ENCODE measurements at regions of chr22 and their contacts with region 1.

Region 1: GRCh38 chr22:49052023-49052538 is 775.6 kb downstream of the BRD1 start:
- DNase-seq: no peak
- ATAC-seq: peak in 2 of 4 donors; percentile 53 to 93
- H3K4me3 ChIP-seq: peak overlapping the region in 9 of 12 donors; percentile 17 to 55 (median 36)
- H3K27ac ChIP-seq: no peak overlapping the region
- H3K4me1 ChIP-seq: no peaks in the 10 kb centered on the region
- H3K27me3 ChIP-seq: peaks cover 0 to 6% (median 0%) of the 10 kb centered on the region in 9 donors
- CTCF ChIP-seq: no peak
- POLR2A ChIP-seq: no peak

Region 2: GRCh38 chr22:49103314-49104059 is 51.4 kb after region 1 on chr22:
- intact Hi-C with region 1: no loop called
- DNase-seq: no peak
- ATAC-seq: no peak
- H3K4me3 ChIP-seq: no peak overlapping the region
- H3K27ac ChIP-seq: no peak overlapping the region
- H3K4me1 ChIP-seq: no peaks in the 10 kb centered on the region
- H3K27me3 ChIP-seq: peaks cover 0 to 58% (median 6%) of the 10 kb centered on the region in 9 donors
- CTCF ChIP-seq: no peak
- POLR2A ChIP-seq: no peak

Region 3: GRCh38 chr22:49140921-49141665 is 89.0 kb after region 1 on chr22:
- intact Hi-C with region 1: loop called in 1 of 10 experiments (anchors 5 kb)
- DNase-seq: peak in 1 of 5 donors; percentile 34
- ATAC-seq: no peak
- H3K4me3 ChIP-seq: no peak overlapping the region
- H3K27ac ChIP-seq: no peak overlapping the region
- H3K4me1 ChIP-seq: no peaks in the 10 kb centered on the region
- H3K27me3 ChIP-seq: peaks cover 0 to 36% (median 6%) of the 10 kb centered on the region in 9 donors
- CTCF ChIP-seq: no peak
- POLR2A ChIP-seq: no peak

Region 4: GRCh38 chr22:49724893-49725474 is 672.9 kb after region 1 on chr22:
- intact Hi-C with region 1: loop called in 1 of 10 experiments (anchors 10 kb)
- DNase-seq: peak; percentile 56 to 78 (median 63)
- ATAC-seq: peak; percentile 55 to 96 (median 93)
- H3K4me3 ChIP-seq: peak overlapping the region; percentile 2 to 56 (median 44)
- H3K27ac ChIP-seq: no peak overlapping the region
- H3K4me1 ChIP-seq: peaks cover 0 to 14% (median 4%) of the 10 kb centered on the region in 12 donors
- H3K27me3 ChIP-seq: peaks cover 6 to 67% (median 30%) of the 10 kb centered on the region in 9 donors
- CTCF ChIP-seq: peak; percentile 59 to 83 (median 72)
- POLR2A ChIP-seq: no peak

Measured in heart left ventricle (tissue), 16 donors.